WTC11 (cell line): ENCODE measurements at regions of chr10 and their contacts with region 1.

Region 1: GRCh38 chr10:33193057-33193700 is 141.3 kb downstream of the NRP1 start:
- DNase-seq: peak; percentile 71
- ATAC-seq: peak; percentile 89
- H3K4me3 Mint-ChIP-seq: no peak overlapping the region
- H3K27ac Mint-ChIP-seq: no peak overlapping the region
- H3K4me1 Mint-ChIP-seq: peaks cover 26% of the 10 kb centered on the region
- H3K27me3 Mint-ChIP-seq: peaks cover 4% of the 10 kb centered on the region; the same call in 1 of the 2 replicates
- CTCF ChIP-seq: peak; percentile 27; the same call in 1 of the 2 replicates

Region 2: GRCh38 chr10:32971536-32972091 is 221.6 kb before region 1 on chr10:
- CTCF ChIA-PET with region 1: no interaction called
- POLR2A ChIA-PET with region 1: no interaction called
- DNase-seq: no peak
- ATAC-seq: peak; percentile 82
- H3K4me3 Mint-ChIP-seq: peak overlapping the region; percentile 32; the same call in 1 of the 2 replicates
- H3K27ac Mint-ChIP-seq: peak overlapping the region; percentile 95
- H3K4me1 Mint-ChIP-seq: peaks cover 37% of the 10 kb centered on the region
- H3K27me3 Mint-ChIP-seq: no peaks in the 10 kb centered on the region
- CTCF ChIP-seq: no peak

Region 3: GRCh38 chr10:33273295-33274002 is 80.3 kb after region 1 on chr10:
- CTCF ChIA-PET with region 1: interaction called, 10 read pairs
- POLR2A ChIA-PET with region 1: no interaction called
- DNase-seq: peak; percentile 19
- ATAC-seq: peak; percentile 69
- H3K4me3 Mint-ChIP-seq: no peak overlapping the region
- H3K27ac Mint-ChIP-seq: no peak overlapping the region
- H3K4me1 Mint-ChIP-seq: peaks cover 26% of the 10 kb centered on the region
- H3K27me3 Mint-ChIP-seq: no peaks in the 10 kb centered on the region
- CTCF ChIP-seq: no peak

Region 4: DNA sequence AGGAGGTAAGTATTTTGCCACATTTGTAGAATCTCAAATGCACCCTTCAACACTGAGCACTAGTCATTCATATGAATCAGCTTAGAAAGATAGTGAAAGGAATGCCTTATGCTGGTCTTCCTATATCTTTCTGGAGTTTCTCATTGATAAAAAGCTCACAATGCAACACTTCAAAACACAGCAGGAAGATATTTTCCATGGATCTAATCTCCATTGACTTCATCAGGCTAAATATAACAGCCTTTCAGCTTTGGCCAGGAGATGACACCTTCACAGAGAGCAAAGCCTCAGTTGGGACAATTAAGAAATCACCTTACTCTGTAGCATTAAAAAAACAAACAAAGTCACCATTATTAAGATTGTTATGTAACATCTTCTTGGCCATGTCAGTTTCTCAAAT is 134.6 kb after region 1 on chr10:
- CTCF ChIA-PET with region 1: interaction called, 15 read pairs
- POLR2A ChIA-PET with region 1: no interaction called
- DNase-seq: no peak
- ATAC-seq: peak; percentile 65
- H3K4me3 Mint-ChIP-seq: no peak overlapping the region
- H3K27ac Mint-ChIP-seq: peak overlapping the region; percentile 69; the same call in 1 of the 2 replicates
- H3K4me1 Mint-ChIP-seq: peaks cover 17% of the 10 kb centered on the region
- H3K27me3 Mint-ChIP-seq: peaks cover 19% of the 10 kb centered on the region
- CTCF ChIP-seq: no peak